A673 (cell line): ENCODE measurements at regions of chr16 and their contacts with region 1.

Region 1: DNA sequence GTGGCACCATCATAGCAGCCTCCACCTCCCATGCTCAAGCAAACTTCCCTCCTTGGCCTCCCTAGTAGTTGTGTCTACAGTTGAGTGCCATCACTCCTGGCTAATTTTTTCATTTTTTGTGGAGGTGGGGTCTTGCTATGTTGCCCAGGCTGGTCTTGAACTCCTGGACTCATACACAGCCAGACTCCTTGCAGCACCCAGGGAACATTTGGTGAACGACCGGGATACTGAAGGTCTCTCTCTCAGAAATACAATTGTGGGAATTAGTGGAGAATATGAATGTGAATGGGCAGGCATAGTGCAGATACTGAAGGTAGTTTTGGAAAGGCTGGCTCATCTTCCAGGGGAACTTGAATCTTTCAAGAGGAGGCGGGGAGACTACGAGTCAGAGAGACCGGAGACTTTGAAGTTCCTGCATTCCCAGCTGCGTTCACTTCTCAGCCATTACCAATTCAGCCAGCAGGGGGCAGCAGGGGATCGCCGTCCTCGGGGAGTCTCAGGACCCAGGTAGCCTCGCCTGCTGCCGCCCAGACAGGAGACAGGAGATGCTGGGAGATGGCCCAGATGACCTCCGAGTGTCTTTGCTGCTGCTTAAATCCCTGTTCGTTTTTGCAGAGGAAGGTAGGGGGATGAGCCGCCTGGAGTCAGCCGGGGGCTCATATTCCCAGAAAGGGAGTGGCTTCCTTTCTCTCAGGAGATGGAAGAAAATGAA is 68.6 kb downstream of the HAPSTR1 start:
- DNase-seq: peak; percentile 86
- H3K4me3 ChIP-seq: no peak overlapping the region
- H3K27ac ChIP-seq: no peak overlapping the region
- H3K4me1 ChIP-seq: no peaks in the 10 kb centered on the region
- H3K27me3 ChIP-seq: no peaks in the 10 kb centered on the region
- CTCF ChIP-seq: peak; percentile 87

Region 2: GRCh38 chr16:9199311-9199710 is 39.3 kb after region 1 on chr16:
- CTCF ChIA-PET with region 1: no interaction called
- POLR2A ChIA-PET with region 1: interaction called, 10 read pairs
- intact Hi-C with region 1: no loop called
- DNase-seq: peak; percentile 95
- H3K4me3 ChIP-seq: no peak overlapping the region
- H3K27ac ChIP-seq: peak overlapping the region; percentile 99
- H3K4me1 ChIP-seq: peaks cover 23% of the 10 kb centered on the region
- H3K27me3 ChIP-seq: no peaks in the 10 kb centered on the region
- CTCF ChIP-seq: no peak

Region 3: GRCh38 chr16:9311303-9311954 is 151.4 kb after region 1 on chr16:
- CTCF ChIA-PET with region 1: no interaction called
- POLR2A ChIA-PET with region 1: no interaction called
- intact Hi-C with region 1: loop called (anchors 10 kb)
- DNase-seq: peak; percentile 54
- H3K4me3 ChIP-seq: no peak overlapping the region
- H3K27ac ChIP-seq: no peak overlapping the region
- H3K4me1 ChIP-seq: no peaks in the 10 kb centered on the region
- H3K27me3 ChIP-seq: peaks cover 3% of the 10 kb centered on the region
- CTCF ChIP-seq: no peak